ENCODE measurements at regions of chr22 and their contacts with region 1.

Region 1: DNA sequence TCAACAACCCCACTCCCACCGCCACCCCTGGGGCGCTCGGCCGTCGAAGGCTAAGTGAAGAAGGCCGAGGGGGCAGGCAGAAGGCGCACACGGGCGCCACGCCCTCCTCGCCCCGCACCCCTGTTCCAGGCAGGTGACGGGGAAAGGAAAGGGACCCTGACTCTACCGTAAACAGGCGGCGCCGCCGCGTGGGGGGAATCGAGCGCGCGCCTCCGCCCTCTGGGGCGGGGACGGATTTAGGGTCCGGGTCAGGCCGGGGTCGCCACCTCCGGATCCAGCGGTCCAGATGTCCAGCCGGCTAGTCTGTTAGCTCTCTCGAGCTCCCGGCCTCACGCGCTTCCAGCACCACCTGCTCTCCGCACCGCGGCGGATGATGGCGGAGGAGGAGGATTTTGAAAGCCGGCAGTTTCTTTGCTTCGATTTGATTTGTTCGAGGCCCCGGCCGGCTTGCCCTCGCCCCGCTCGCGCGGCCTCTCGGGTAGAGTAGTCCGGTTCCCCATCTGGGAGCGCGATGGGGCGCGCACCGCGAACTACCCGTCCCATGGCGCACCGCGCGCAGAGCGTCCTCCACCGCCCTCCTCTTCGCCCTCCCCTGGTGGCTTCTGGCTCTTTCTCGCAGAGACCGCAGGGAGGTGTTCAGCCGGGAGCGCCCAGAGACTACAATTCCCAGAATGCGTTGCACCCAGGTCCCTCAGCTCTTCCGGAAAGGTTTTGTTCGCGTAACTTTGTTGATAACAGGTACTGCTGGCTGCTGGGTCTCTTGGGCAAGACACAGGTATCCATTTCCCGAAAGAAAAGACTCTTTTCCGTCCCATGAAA is at the start of gene RANGAP1:
- DNase-seq: peak; percentile 99
- ATAC-seq: peak; percentile 96
- H3K4me3 ChIP-seq: peak within 1 kb of the TSS; percentile 80 to 98 (median 88)
- H3K4me3 Mint-ChIP-seq: peak within 1 kb of the TSS; percentile 100
- H3K27ac ChIP-seq: peak within 1 kb of the TSS; percentile 94 to 95
- H3K27ac Mint-ChIP-seq: peak within 1 kb of the TSS; percentile 99
- H3K4me1 ChIP-seq: peaks cover 12 to 16% of the 10 kb centered on the region in 2 donors
- H3K4me1 Mint-ChIP-seq: peaks cover 26% of the 10 kb centered on the region
- H3K27me3 ChIP-seq: no peaks in the 10 kb centered on the region
- H3K27me3 Mint-ChIP-seq: no peaks in the 10 kb centered on the region
- CTCF ChIP-seq: no peak
- total RNA-seq, gene RANGAP1: 48.4 and 48.8 TPM in 2 replicates

Region 2: GRCh38 chr22:40346178-40347118 is 939.6 kb before region 1 on chr22 and contains the start of gene ADSL:
- CTCF ChIA-PET with region 1: no interaction called
- POLR2A ChIA-PET with region 1: no interaction called
- intact Hi-C with region 1: loop called (anchors 5 kb)
- DNase-seq: peak; percentile 91
- ATAC-seq: peak; percentile 89
- H3K4me3 ChIP-seq: peak within 1 kb of the TSS; percentile 84 to 92 (median 88)
- H3K4me3 Mint-ChIP-seq: peak within 1 kb of the TSS; percentile 98
- H3K27ac ChIP-seq: peak within 1 kb of the TSS; percentile 74 to 75
- H3K27ac Mint-ChIP-seq: peak within 1 kb of the TSS; percentile 97
- H3K4me1 ChIP-seq: peaks cover 11 to 27% of the 10 kb centered on the region in 2 donors
- H3K4me1 Mint-ChIP-seq: peaks cover 32% of the 10 kb centered on the region
- H3K27me3 ChIP-seq: no peaks in the 10 kb centered on the region
- H3K27me3 Mint-ChIP-seq: no peaks in the 10 kb centered on the region
- CTCF ChIP-seq: no peak
- total RNA-seq, gene ADSL: 56.3 and 63.8 TPM in 2 replicates

Region 3: GRCh38 chr22:41070665-41071331 is 215.2 kb before region 1 on chr22:
- CTCF ChIA-PET with region 1: interaction called, 3 read pairs
- POLR2A ChIA-PET with region 1: interaction called, 7 read pairs
- intact Hi-C with region 1: loop called (anchors 1 kb)
- DNase-seq: no peak
- ATAC-seq: no peak
- H3K4me3 ChIP-seq: no peak overlapping the region
- H3K4me3 Mint-ChIP-seq: no peak overlapping the region
- H3K27ac ChIP-seq: peak overlapping the region in 1 of 2 donors; percentile 41
- H3K27ac Mint-ChIP-seq: no peak overlapping the region
- H3K4me1 ChIP-seq: peaks cover 33 to 34% of the 10 kb centered on the region in 2 donors
- H3K4me1 Mint-ChIP-seq: peaks cover 28% of the 10 kb centered on the region
- H3K27me3 ChIP-seq: no peaks in the 10 kb centered on the region
- H3K27me3 Mint-ChIP-seq: no peaks in the 10 kb centered on the region
- CTCF ChIP-seq: no peak

Region 4: DNA sequence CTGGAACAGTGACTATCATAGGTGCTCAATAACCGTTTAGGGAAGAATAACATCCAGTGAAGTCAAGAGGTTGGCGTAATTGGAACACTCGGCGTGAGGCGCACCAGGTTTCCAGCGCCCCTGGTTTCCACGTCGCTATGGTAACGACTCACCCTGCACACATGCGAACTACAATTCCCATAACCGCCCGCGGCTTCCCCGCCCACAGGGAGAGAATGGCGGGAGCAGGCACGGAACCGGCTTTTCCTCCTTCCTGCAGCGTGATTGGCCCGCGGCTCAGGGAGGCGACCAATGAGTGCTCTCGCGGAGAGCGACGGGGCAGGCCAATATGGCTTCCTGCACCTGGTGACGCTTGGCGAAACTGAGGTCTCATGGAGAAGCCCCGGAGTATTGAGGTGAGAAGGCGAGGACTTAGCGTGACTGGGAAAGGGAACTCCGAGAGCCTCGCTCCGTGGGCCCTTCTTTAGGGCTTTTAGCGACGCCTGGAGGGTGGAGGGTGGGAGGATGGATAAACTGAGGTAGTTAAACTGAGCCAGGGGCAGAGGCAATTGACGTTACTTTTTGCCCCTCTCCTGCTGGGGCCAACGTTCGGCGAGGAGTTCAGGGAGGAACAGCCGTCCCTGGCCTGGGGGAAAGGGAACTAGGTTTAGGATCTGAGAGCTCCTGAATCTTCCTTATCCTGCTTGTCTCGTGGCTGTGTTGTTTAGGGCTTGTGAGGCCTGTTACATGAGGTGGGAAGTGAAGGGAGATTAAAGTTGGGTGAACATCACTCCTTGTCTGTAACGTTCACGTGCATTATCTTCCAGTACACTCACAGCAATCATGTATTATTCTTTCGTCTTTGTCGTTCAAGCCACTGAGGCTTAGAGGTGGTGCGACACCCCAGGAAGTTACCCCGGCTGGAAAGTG is 80.8 kb before region 1 on chr22 and contains the start of gene L3MBTL2:
- CTCF ChIA-PET with region 1: no interaction called
- POLR2A ChIA-PET with region 1: no interaction called
- intact Hi-C with region 1: loop called (anchors 1 kb)
- DNase-seq: peak; percentile 98
- ATAC-seq: peak; percentile 100
- H3K4me3 ChIP-seq: peak within 1 kb of the TSS; percentile 81 to 96 (median 90)
- H3K4me3 Mint-ChIP-seq: peak within 1 kb of the TSS; percentile 94
- H3K27ac ChIP-seq: peak within 1 kb of the TSS; percentile 70 to 73
- H3K27ac Mint-ChIP-seq: peak within 1 kb of the TSS; percentile 88
- H3K4me1 ChIP-seq: peaks cover 9 to 14% of the 10 kb centered on the region in 2 donors
- H3K4me1 Mint-ChIP-seq: peaks cover 28% of the 10 kb centered on the region
- H3K27me3 ChIP-seq: peaks cover 0 to 12% (median 0%) of the 10 kb centered on the region in 4 experiments
- H3K27me3 Mint-ChIP-seq: peaks cover 6% of the 10 kb centered on the region
- CTCF ChIP-seq: no peak
- total RNA-seq, gene L3MBTL2: 32.4 and 37.3 TPM in 2 replicates

Region 5: GRCh38 chr22:41381329-41382097 is 95.5 kb after region 1 on chr22 and contains the start of gene TEF:
- CTCF ChIA-PET with region 1: interaction called, 3 read pairs
- POLR2A ChIA-PET with region 1: interaction called, 12 read pairs
- intact Hi-C with region 1: no loop called
- DNase-seq: peak; percentile 98
- ATAC-seq: peak; percentile 81
- H3K4me3 ChIP-seq: peak within 1 kb of the TSS; percentile 56 to 93 (median 70)
- H3K4me3 Mint-ChIP-seq: peak within 1 kb of the TSS; percentile 88
- H3K27ac ChIP-seq: peak within 1 kb of the TSS; percentile 93 to 95
- H3K27ac Mint-ChIP-seq: peak within 1 kb of the TSS; percentile 99
- H3K4me1 ChIP-seq: peaks cover 10 to 18% of the 10 kb centered on the region in 2 donors
- H3K4me1 Mint-ChIP-seq: peaks cover 20% of the 10 kb centered on the region
- H3K27me3 ChIP-seq: no peaks in the 10 kb centered on the region
- H3K27me3 Mint-ChIP-seq: no peaks in the 10 kb centered on the region
- CTCF ChIP-seq: no peak
- total RNA-seq, gene TEF: 5.5 and 6.8 TPM in 2 replicates

Region 6: DNA sequence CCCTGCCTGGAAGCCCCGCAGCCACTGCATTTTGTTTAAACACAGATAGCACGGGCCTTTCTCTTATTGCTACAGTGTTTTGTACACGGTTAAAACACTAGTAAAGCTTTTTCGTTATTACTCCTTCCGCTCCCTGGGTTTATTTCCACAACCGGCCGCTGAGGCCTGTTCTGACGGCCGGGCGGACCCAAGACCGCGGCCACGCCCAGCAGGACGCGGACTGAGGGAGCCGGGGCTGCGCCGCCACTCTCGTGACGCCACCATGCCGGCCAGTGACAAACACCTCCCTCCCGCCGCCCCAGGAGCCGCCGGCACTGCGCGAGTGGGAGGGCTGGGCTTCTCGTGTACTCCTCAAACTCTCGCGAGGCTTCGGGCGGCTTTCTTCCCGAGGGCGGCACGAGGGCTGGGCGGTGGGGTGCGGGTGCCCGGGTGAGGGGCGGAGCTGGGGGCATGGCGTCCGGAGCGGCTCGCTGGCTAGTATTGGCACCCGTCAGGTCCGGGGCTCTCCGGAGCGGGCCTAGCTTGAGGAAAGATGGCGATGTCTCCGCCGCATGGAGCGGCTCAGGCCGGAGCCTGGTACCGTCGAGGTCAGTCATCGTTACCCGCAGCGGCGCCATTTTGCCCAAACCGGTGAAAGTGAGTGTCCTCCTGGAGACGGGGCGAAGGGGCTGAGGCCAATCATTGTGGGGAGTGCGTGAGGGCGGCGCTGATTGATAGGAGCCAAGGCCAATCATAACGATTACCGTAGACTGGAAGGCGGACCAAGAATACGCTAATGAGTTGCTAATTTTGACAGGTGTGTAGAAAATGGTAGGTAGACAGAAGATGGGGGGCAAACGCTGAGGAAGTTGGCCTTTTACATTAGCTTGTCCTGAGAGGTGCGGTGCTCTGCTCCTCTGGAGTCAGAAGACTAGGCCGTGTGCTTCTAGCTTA is 793.6 kb after region 1 on chr22 and contains the start of gene SMDT1:
- CTCF ChIA-PET with region 1: no interaction called
- POLR2A ChIA-PET with region 1: no interaction called
- intact Hi-C with region 1: loop called (anchors 2 kb)
- DNase-seq: peak; percentile 100
- ATAC-seq: peak; percentile 86
- H3K4me3 ChIP-seq: peak within 1 kb of the TSS; percentile 66 to 92 (median 86)
- H3K4me3 Mint-ChIP-seq: peak within 1 kb of the TSS; percentile 96
- H3K27ac ChIP-seq: peak within 1 kb of the TSS; percentile 99
- H3K27ac Mint-ChIP-seq: peak within 1 kb of the TSS; percentile 97
- H3K4me1 ChIP-seq: peaks cover 22 to 32% of the 10 kb centered on the region in 2 donors
- H3K4me1 Mint-ChIP-seq: peaks cover 41% of the 10 kb centered on the region
- H3K27me3 ChIP-seq: no peaks in the 10 kb centered on the region
- H3K27me3 Mint-ChIP-seq: no peaks in the 10 kb centered on the region
- CTCF ChIP-seq: no peak
- total RNA-seq, gene SMDT1: 133 and 140 TPM in 2 replicates